ENCODE measurements at regions of chrX and their contacts with region 1.

Region 1: GRCh38 chrX:11533211-11533651 is 132.5 kb downstream of the ARHGAP6 start:
- DNase-seq: peak in 1 of 2 experiments; percentile 76
- H3K4me3 ChIP-seq: no peak overlapping the region
- H3K27ac ChIP-seq: no peak overlapping the region
- H3K4me1 ChIP-seq: no peaks in the 10 kb centered on the region
- H3K27me3 ChIP-seq: no peaks in the 10 kb centered on the region
- CTCF ChIP-seq: peak; percentile 88

Region 2: DNA sequence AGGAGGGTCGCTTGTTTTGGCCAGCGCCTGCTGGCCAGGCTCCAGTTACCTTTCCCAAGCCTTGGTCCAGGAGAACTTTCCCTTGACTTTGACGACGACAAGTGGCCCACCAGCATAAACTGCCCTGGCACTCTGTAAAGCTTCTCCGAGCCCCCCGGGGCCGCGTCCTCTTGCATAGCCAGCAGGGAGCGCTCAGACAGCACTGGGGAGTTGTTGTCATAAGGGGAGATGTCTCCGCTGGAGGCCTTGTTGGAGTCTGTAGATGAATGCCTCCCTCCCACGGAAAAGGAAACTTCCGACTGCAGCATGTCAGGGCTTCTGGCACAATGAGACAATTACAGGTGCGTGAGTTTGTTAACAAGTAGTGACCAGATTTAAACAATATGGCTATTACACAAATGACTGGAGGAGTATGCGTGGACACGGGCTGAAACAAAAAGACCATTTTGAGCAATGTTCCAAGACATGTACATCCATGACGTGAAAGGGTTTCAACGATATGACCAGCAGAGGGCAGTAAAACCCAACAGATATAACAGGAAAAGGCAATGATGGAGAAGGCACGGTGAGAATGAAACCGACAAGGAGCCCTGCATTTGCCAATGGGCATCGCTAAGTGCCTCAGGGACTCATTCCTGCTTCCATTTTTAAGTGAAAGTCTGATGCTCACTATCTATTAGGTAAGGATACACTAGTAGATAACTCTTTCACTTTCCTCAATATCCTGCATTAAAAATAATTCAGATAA is 389.1 kb before region 1 on chrX:
- CTCF ChIA-PET with region 1: no interaction called
- POLR2A ChIA-PET with region 1: no interaction called
- intact Hi-C with region 1: loop called (anchors 1 kb)
- DNase-seq: peak; percentile 30 to 36
- H3K4me3 ChIP-seq: no peak overlapping the region
- H3K27ac ChIP-seq: no peak overlapping the region
- H3K4me1 ChIP-seq: no peaks in the 10 kb centered on the region
- H3K27me3 ChIP-seq: no peaks in the 10 kb centered on the region
- CTCF ChIP-seq: peak; percentile 66

Region 3: GRCh38 chrX:11423362-11423818 is 109.8 kb before region 1 on chrX:
- CTCF ChIA-PET with region 1: no interaction called
- POLR2A ChIA-PET with region 1: no interaction called
- intact Hi-C with region 1: no loop called
- DNase-seq: no peak
- H3K4me3 ChIP-seq: no peak overlapping the region
- H3K27ac ChIP-seq: no peak overlapping the region
- H3K4me1 ChIP-seq: no peaks in the 10 kb centered on the region
- H3K27me3 ChIP-seq: no peaks in the 10 kb centered on the region; the same call in 1 of the 2 replicates
- CTCF ChIP-seq: no peak

Region 4: DNA sequence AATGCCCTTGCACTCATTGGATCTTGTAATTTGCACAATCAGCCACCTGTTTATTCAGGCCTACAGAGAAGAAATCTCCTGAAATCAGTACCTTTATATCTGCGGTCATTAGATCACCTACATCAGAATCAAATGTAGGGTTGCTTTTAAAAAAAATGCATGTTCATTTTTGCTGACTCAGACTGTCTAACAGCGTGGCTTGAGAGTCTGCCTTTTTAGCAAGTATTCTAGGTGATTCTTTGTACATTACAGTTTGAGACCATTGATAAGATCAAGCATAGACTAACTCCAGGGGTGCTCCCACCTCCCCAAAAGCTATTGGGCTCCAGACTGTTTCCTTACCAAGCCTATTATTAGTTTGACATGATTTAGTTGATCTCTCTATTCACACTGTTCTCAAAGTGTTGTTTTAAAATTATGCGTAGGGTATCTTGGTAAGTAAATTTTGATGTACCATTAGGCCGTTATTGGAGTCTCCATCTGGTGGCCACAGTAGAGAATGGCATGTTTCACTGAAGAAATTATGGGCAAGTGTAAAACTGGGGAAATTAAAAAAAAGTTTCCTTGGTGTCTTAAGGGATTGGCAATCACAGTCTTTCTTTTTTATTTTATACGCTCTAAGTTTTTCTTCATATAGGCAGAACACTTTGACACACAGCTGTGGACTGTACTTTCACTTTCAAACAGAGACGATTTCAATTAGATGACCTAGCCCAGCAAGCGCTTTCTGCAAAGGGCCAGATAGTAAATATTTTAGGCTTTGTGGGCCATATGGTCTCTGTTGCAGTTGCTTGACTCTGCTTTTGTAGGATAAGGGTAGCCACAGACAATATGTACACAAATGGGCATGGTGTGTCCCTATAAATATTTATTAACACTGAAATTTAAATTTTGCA is 191.1 kb after region 1 on chrX:
- CTCF ChIA-PET with region 1: no interaction called
- POLR2A ChIA-PET with region 1: no interaction called
- intact Hi-C with region 1: loop called (anchors 5 kb)
- DNase-seq: peak in 1 of 2 experiments; percentile 3
- H3K4me3 ChIP-seq: no peak overlapping the region
- H3K27ac ChIP-seq: no peak overlapping the region
- H3K4me1 ChIP-seq: no peaks in the 10 kb centered on the region
- H3K27me3 ChIP-seq: no peaks in the 10 kb centered on the region
- CTCF ChIP-seq: peak; percentile 70

Region 5: DNA sequence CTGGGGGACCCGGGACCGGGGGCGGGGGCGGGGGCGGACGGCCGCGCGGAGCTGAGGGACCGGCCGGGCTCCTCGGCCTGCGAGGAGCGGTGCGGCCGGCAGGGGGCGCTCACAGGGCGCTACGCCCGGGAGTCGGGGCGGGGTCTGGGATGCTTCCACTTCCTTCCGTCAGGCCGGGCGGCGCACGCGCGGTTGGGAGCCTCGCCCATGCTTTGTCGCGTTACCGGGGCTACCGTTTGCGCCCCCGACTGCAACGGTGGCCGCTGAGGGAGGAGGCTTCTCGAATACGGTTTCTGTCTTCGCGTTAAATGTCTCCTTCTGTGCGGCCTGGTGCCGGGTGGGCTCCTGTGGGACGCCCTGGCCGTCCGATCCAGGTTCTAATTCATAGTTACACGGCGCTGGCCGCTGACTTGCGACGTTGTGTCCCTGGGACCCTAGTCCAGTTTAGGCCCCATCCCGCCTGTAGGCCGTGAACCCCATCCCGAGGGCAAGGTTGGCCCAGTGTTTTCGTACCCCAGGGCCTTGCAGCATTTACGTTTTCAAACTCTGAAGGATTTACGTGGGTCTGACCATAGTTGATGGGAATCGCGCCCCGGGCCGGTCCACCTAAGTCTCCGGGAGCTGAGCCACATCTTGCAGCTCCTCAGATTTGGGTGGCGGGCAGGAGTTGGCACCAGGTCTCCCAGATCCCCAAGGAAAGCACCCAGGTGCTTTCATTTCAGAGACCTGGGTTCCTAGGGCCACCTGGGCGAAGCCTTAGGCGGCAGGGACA is 225.4 kb after region 1 on chrX:
- CTCF ChIA-PET with region 1: no interaction called
- POLR2A ChIA-PET with region 1: no interaction called
- intact Hi-C with region 1: loop called (anchors 5 kb)
- DNase-seq: peak; percentile 49 to 82
- H3K4me3 ChIP-seq: peak overlapping the region; percentile 93
- H3K27ac ChIP-seq: no peak overlapping the region; the same call in 1 of the 2 replicates
- H3K4me1 ChIP-seq: peaks cover 13% of the 10 kb centered on the region
- H3K27me3 ChIP-seq: no peaks in the 10 kb centered on the region
- CTCF ChIP-seq: peak; percentile 55

Region 6: DNA sequence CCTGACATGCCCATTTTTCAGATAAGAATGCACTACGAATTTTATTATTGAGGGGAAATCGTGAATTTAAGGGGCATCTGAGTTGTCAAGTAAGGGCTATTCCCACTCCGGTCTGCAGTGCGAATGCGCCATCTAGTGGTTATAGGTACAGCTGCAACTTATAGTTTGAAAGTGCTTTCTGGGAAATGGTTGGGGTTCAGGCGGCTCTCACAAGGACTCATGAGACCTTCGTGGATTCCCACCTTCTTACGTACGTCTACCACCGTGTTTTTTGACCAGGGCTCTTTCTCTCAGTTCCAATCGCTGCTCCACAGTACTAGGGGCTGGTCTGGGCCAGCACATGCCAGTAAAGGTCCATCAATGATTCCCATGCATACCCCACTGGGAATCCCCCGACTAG is 237.1 kb after region 1 on chrX:
- CTCF ChIA-PET with region 1: no interaction called
- POLR2A ChIA-PET with region 1: no interaction called
- intact Hi-C with region 1: loop called (anchors 1 kb)
- DNase-seq: peak; percentile 18 to 44
- H3K4me3 ChIP-seq: no peak overlapping the region
- H3K27ac ChIP-seq: no peak overlapping the region
- H3K4me1 ChIP-seq: no peaks in the 10 kb centered on the region
- H3K27me3 ChIP-seq: no peaks in the 10 kb centered on the region
- CTCF ChIP-seq: peak; percentile 83

Region 7: DNA sequence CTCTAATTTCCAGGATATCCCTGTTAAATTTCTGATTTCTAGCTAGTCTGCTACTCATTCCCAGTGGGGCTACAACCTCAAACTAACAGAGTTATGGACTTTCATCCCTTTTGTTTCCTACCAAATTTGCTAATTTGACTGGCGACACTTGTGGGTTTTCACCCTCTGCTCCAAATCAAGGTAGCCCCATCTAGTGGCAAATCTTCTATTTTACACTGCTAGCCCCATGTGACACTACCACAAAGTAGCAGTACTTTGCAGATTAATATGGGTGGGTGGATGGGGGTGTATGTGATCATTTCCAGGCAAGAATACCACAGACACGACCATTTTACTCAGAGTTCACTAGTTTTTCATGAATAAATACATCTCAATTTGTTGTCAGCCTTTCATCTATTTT is 375.1 kb after region 1 on chrX:
- CTCF ChIA-PET with region 1: no interaction called
- POLR2A ChIA-PET with region 1: no interaction called
- intact Hi-C with region 1: loop called (anchors 10 kb)
- DNase-seq: no peak
- H3K4me3 ChIP-seq: no peak overlapping the region
- H3K27ac ChIP-seq: no peak overlapping the region
- H3K4me1 ChIP-seq: no peaks in the 10 kb centered on the region
- H3K27me3 ChIP-seq: no peaks in the 10 kb centered on the region
- CTCF ChIP-seq: peak; percentile 52

Region 8: GRCh38 chrX:12771445-12772069 is 1238.3 kb after region 1 on chrX:
- CTCF ChIA-PET with region 1: no interaction called
- POLR2A ChIA-PET with region 1: no interaction called
- intact Hi-C with region 1: loop called (anchors 10 kb)
- DNase-seq: peak in 1 of 2 experiments; percentile 31
- H3K4me3 ChIP-seq: no peak overlapping the region
- H3K27ac ChIP-seq: no peak overlapping the region
- H3K4me1 ChIP-seq: no peaks in the 10 kb centered on the region; the same call in 1 of the 2 replicates
- H3K27me3 ChIP-seq: no peaks in the 10 kb centered on the region
- CTCF ChIP-seq: peak; percentile 67

Measured in PC-9 (cell line).